ENCODE measurements at regions of chr3 and their contacts with region 1.

Region 1: DNA sequence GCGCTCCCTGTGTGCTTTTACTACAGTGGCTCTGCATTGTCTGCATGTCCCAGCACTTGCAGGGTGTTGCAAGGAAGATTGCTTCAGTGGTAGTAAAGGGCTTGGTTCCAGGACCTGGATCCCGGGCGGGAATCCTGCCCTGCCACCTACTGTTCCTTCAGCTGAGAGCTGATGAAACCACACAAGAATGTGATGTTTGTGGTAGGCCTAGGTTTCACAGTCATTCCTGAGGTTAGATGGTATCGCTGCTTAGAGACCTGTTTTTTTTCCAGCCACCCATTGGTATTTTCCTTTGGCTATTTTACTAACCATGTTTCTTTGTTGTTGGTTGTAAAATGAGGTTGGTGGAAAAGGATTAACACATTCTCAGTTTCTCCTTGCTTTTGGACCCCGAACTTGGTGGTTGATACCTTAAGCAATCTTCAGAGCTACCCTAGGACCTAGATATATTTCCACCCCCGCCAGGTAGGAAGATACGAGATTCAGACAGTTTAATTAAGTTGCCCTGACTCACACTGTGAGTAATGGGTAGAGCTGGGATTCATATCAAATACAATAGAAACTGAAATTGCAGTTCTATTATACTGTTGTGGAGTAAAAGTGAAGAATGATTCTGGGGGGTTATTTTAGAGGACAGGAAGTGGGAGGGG is 11.4 kb downstream of the GPR87 start:
- DNase-seq: no peak
- H3K4me3 Mint-ChIP-seq: peak overlapping the region; percentile 5
- H3K27ac Mint-ChIP-seq: peak overlapping the region; percentile 70
- H3K4me1 Mint-ChIP-seq: peaks cover 63% of the 10 kb centered on the region
- H3K27me3 Mint-ChIP-seq: peaks cover 3% of the 10 kb centered on the region

Region 2: DNA sequence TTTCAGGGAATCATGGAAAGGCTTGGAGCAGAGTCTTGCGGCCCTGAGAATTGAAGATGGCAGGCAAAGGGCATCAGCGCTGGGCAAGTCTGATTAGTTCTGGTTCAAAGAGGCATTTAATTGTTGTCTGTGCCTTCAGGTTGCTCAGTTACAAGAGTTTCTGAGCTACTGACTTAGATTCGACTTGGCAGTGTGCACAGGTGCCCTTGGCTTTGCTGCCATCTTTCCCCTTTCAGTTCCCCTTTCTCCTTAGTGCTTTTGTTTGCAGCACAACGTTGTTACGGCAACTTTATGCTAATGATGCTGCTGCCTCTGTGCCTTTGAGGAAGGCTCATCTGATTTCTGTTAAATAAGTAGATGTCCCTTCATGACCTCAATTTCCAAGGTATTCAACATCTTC is 39.4 kb before region 1 on chr3:
- intact Hi-C with region 1: loop called (anchors 1 kb)
- DNase-seq: no peak
- H3K4me3 Mint-ChIP-seq: no peak overlapping the region
- H3K27ac Mint-ChIP-seq: no peak overlapping the region
- H3K4me1 Mint-ChIP-seq: peaks cover 66% of the 10 kb centered on the region
- H3K27me3 Mint-ChIP-seq: peaks cover 5% of the 10 kb centered on the region

Region 3: DNA sequence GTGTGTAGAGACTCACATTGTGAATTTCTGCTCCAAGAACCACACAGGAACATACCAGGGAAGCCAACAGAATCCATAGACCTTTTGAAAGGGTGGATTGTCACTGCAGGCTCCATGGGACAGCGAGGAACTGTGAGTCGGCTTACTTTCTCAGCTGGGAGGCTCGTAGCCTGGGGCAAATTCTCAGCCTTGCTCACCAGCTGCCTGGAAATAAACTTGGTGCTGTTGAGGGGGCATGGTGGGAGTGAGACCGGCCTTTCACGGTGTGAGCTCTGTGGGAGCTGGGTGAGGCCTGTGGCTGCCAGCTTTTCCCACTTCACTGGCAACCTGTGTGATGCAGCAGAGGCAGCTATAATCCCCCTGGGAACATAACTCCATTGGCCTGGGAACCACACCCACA is 1383.1 kb after region 1 on chr3:
- intact Hi-C with region 1: loop called (anchors 2 kb)
- DNase-seq: no peak
- H3K4me3 Mint-ChIP-seq: no peak overlapping the region
- H3K27ac Mint-ChIP-seq: no peak overlapping the region
- H3K4me1 Mint-ChIP-seq: peaks cover 7% of the 10 kb centered on the region
- H3K27me3 Mint-ChIP-seq: peaks cover 2% of the 10 kb centered on the region

Measured in activated T-helper 1 cell treated with anti-CD3 and anti-CD28 coated beads, Interleukin-12 subunit alpha, Interleukin-12 subunit beta, Interleukin-2, Interleukin-4 antibody, amounts not matched to agents 30 ng/mL and 10 ng/mL and 1 ng/mL, durations not matched to agents 14 hours and 24 hours and 36 hours (primary cell).